ENCODE measurements at regions of chr11 and their contacts with region 1.

Region 1: GRCh38 chr11:66466225-66467027 is at the start of gene PELI3:
- DNase-seq: peak; percentile 83 to 97 (median 92)
- ATAC-seq: peak; percentile 88 to 93 (median 90)
- H3K4me3 ChIP-seq: peak within 1 kb of the TSS; percentile 49 to 70
- H3K4me3 Mint-ChIP-seq: peak within 1 kb of the TSS; percentile 83 to 89 (median 88)
- H3K27ac ChIP-seq: peak within 1 kb of the TSS; percentile 94
- H3K27ac Mint-ChIP-seq: peak within 1 kb of the TSS; percentile 85 to 91
- H3K4me1 ChIP-seq: peaks cover 7 to 24% of the 10 kb centered on the region in 2 experiments
- H3K4me1 Mint-ChIP-seq: peaks cover 20 to 30% (median 25%) of the 10 kb centered on the region in 3 donors
- H3K27me3 ChIP-seq: no peaks in the 10 kb centered on the region
- H3K27me3 Mint-ChIP-seq: no peaks in the 10 kb centered on the region
- total RNA-seq, gene PELI3: 12.9 to 22.0 (median 13.8) TPM

Region 2: GRCh38 chr11:66438504-66439466 is 27.6 kb before region 1 on chr11 and contains the start of gene MRPL11:
- CTCF ChIA-PET with region 1: interaction called in 1 of 2 experiments, 13 read pairs
- POLR2A ChIA-PET with region 1: interaction called, 3 to 16 read pairs
- DNase-seq: peak; percentile 78 to 95 (median 86)
- ATAC-seq: peak; percentile 94 to 99 (median 97)
- H3K4me3 ChIP-seq: peak within 1 kb of the TSS; percentile 69 to 96
- H3K4me3 Mint-ChIP-seq: peak within 1 kb of the TSS; percentile 81 to 86 (median 84)
- H3K27ac ChIP-seq: peak within 1 kb of the TSS; percentile 58
- H3K27ac Mint-ChIP-seq: peak within 1 kb of the TSS; percentile 95 to 100
- H3K4me1 ChIP-seq: peaks cover 4 to 11% of the 10 kb centered on the region in 2 experiments
- H3K4me1 Mint-ChIP-seq: peaks cover 11 to 16% (median 13%) of the 10 kb centered on the region in 3 donors
- H3K27me3 ChIP-seq: no peaks in the 10 kb centered on the region
- H3K27me3 Mint-ChIP-seq: peaks cover 2% of the 10 kb centered on the region in 2 donors
- total RNA-seq, gene MRPL11: 23.5 to 29.4 (median 27.2) TPM

Region 3: DNA sequence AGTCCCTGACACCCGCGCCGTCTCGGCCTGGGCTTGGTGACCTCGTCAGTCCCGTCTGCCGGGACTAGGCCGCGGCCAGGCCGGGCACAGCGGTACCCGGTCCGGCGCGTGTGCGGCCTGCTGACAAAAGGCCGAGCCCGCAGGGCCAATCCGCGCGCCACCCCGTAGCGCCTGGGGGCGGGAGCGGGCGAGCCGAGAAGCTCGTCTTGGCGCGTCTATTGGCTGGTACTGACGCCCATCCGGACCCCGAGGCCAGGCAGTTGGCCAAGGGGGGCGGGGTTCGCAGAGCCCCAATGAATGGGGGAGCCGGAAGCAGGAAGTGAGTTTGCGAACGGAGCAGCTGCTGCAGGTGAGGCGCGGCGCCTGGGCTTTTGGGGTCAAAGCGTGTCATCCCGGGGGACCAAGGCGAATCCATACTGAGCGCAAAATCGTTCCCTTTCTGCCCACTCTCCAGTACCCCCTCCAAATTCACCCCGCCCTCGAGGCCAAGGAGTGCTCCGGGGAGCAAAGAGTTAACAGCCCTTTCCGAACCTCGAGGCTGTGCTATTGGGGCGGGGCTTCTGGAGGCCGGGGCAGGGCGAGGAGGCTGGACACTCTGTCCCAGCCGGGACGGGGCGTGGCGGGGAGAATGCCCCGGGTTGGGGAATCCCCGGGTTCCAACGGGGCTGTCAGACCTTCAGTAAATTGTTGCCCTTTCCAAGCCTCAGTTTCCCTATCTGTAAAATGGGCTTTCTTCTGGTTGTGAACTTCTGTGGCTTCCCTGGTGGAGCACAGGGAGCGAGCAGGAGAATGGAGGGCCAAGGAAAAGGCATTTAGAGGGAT is 13.9 kb after region 1 on chr11 and contains the start of gene DPP3:
- CTCF ChIA-PET with region 1: interaction called in 1 of 2 experiments, 12 read pairs
- POLR2A ChIA-PET with region 1: interaction called, 4 to 7 read pairs
- DNase-seq: peak; percentile 86 to 98 (median 95)
- ATAC-seq: peak; percentile 98 to 99 (median 98)
- H3K4me3 ChIP-seq: peak within 1 kb of the TSS; percentile 72 to 89
- H3K4me3 Mint-ChIP-seq: peak within 1 kb of the TSS; percentile 85 to 91 (median 87)
- H3K27ac ChIP-seq: peak within 1 kb of the TSS; percentile 58
- H3K27ac Mint-ChIP-seq: peak within 1 kb of the TSS; percentile 78 to 92
- H3K4me1 ChIP-seq: peaks cover 3 to 23% of the 10 kb centered on the region in 2 experiments
- H3K4me1 Mint-ChIP-seq: peaks cover 22 to 28% (median 25%) of the 10 kb centered on the region in 3 donors
- H3K27me3 ChIP-seq: no peaks in the 10 kb centered on the region
- H3K27me3 Mint-ChIP-seq: no peaks in the 10 kb centered on the region
- total RNA-seq, gene DPP3: 20.7 to 34.6 (median 29.5) TPM

Region 4: GRCh38 chr11:66609721-66610617 is 143.5 kb after region 1 on chr11:
- CTCF ChIA-PET with region 1: no interaction called
- POLR2A ChIA-PET with region 1: no interaction called
- DNase-seq: no peak
- ATAC-seq: peak in 1 of 4 experiments; percentile 41
- H3K4me3 ChIP-seq: no peak overlapping the region
- H3K4me3 Mint-ChIP-seq: no peak overlapping the region
- H3K27ac ChIP-seq: peak overlapping the region; percentile 41
- H3K27ac Mint-ChIP-seq: peak overlapping the region; percentile 74 to 80
- H3K4me1 ChIP-seq: no peaks in the 10 kb centered on the region
- H3K4me1 Mint-ChIP-seq: peaks cover 6 to 17% (median 9%) of the 10 kb centered on the region in 3 donors
- H3K27me3 ChIP-seq: no peaks in the 10 kb centered on the region
- H3K27me3 Mint-ChIP-seq: no peaks in the 10 kb centered on the region

Region 5: DNA sequence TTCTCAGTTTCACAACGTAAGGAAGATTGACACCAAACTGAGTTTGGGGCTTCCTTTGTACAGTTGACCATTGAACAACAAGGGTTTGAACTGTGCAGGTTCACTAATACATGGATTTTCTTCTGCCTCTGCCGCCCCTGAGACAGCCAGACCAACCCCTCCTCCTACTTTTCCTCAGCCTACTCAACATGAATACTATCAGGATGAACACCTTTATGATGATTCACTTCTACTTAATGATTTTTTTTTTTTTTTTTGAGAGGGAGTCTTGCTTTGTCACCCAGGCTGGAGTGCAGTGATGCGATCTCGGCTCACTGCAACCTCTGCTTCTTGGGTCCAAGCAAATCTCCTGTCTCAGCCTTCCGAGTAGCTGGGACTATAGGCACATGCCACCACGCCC is 186.7 kb after region 1 on chr11:
- CTCF ChIA-PET with region 1: no interaction called
- POLR2A ChIA-PET with region 1: no interaction called
- DNase-seq: no peak
- ATAC-seq: no peak
- H3K4me3 ChIP-seq: no peak overlapping the region
- H3K4me3 Mint-ChIP-seq: no peak overlapping the region
- H3K27ac ChIP-seq: no peak overlapping the region
- H3K27ac Mint-ChIP-seq: peak overlapping the region; percentile 1 to 58
- H3K4me1 ChIP-seq: peaks cover 0 to 11% of the 10 kb centered on the region in 2 experiments
- H3K4me1 Mint-ChIP-seq: peaks cover 39 to 47% (median 42%) of the 10 kb centered on the region in 3 donors
- H3K27me3 ChIP-seq: no peaks in the 10 kb centered on the region
- H3K27me3 Mint-ChIP-seq: no peaks in the 10 kb centered on the region

Measured in T-cell (primary cell).